GM12878 (cell line): ENCODE measurements at regions of chr3 and their contacts with region 1.

Region 1: DNA sequence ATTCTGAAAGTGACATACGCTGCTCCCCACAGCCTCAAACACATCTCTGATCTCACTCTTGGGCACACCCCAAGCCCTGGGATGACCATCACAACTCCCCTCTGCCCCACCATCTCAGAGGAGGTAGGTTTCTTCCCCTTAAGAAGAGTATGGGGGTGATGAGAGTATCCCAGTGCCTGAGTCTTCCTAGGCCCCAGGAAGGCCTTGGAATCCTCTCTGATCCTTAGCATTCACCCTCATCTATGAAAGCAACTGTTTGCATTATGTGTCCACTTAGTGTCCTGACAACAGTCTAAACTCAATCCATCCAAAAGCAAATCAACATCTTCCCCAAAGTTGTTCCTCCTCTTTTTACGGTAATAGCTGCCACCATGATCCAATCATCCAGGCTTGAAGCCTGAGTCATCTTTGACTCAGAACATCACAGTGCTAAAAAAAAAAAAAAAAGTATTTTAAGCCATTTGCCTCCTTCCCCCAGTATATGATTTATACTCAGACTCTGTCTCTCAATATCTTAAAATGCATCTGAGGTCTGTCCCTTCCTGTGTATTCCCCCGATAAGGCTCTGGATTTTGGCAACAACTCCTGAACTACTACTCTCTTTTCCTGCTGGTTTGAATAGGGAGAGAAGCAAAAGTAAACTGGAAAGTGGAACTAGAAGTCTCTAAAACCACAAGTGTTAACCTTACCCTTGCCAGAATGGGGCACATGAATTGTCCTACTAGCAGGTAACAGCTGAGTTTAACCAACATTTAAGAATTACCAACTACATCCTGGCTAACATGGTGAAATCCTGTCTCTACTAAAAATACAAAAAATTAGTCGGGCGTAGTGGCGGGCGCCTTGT is 22.5 kb downstream of the POPDC2 start:
- DNase-seq: peak; percentile 82
- ATAC-seq: peak; percentile 62
- H3K4me3 ChIP-seq: peak overlapping the region; percentile 21; the same call in 1 of the 2 replicates
- H3K27ac ChIP-seq: peak overlapping the region; percentile 96
- H3K4me1 ChIP-seq: peaks cover 37% of the 10 kb centered on the region
- H3K27me3 ChIP-seq: no peaks in the 10 kb centered on the region
- CTCF ChIP-seq: no peak
- EP300 ChIP-seq: peak; percentile 16 to 29; a peak in 1 of 4 replicates
- POLR2A ChIP-seq: no peak
- RAD21 ChIP-seq: no peak

Region 2: DNA sequence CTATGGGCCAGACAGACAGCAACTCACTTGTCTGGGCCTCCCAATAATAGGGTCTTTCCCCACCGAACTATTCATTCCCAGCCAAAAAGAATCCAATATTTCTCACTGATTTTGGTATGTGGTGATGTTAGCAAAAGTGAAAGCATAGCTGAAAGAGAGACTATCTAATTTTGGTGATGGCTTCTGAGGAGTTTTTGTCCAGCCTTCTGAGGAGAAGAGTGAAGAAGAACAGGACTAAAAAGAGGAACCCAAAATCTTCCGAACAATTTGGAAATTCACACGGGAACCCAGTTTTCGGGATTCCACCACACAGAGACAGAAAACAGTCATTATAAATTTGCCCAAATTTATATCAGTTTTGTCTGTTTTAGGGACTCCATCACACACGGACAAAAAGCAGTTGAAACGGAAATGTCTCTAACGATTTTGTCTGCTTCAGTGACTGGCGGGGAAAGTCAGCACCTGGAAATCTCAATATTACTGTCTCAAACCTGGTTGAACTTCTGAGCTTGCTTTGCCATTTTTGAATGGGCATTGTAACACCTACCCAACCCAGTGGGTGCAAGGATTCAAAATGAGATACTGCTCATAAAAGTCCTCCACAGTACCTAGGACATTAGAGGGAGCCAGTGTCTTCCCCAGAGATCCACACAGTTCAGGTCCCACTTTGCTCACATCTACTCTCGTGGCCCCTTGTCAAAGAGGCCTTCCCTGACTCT is 87.6 kb before region 1 on chr3:
- CTCF ChIA-PET with region 1: interaction called, 10 read pairs
- POLR2A ChIA-PET with region 1: interaction called, 3 read pairs
- RAD21 ChIA-PET with region 1: no interaction called
- SMC1A ChIA-PET with region 1: interaction called, 4 read pairs
- in situ Hi-C with region 1: no loop called
- intact Hi-C with region 1: no loop called
- DNase-seq: no peak
- ATAC-seq: peak; percentile 52
- H3K4me3 ChIP-seq: peak overlapping the region; percentile 57
- H3K27ac ChIP-seq: peak overlapping the region; percentile 93
- H3K4me1 ChIP-seq: peaks cover 43% of the 10 kb centered on the region
- H3K27me3 ChIP-seq: no peaks in the 10 kb centered on the region
- CTCF ChIP-seq: peak; percentile 11 to 50 (median 12); a peak in 3 of 6 replicates
- EP300 ChIP-seq: no peak
- POLR2A ChIP-seq: peak; percentile 54
- RAD21 ChIP-seq: peak; percentile 52

Region 3: GRCh38 chr3:119579366-119580165 is 58.3 kb before region 1 on chr3 and contains the start of gene ADPRH:
- CTCF ChIA-PET with region 1: no interaction called
- POLR2A ChIA-PET with region 1: interaction called, 9 read pairs
- RAD21 ChIA-PET with region 1: no interaction called
- SMC1A ChIA-PET with region 1: no interaction called
- in situ Hi-C with region 1: no loop called
- intact Hi-C with region 1: loop called (anchors 1 kb)
- DNase-seq: no peak
- ATAC-seq: peak; percentile 80
- H3K4me3 ChIP-seq: peak within 1 kb of the TSS; percentile 84
- H3K27ac ChIP-seq: peak within 1 kb of the TSS; percentile 97
- H3K4me1 ChIP-seq: peaks cover 17% of the 10 kb centered on the region
- H3K27me3 ChIP-seq: no peaks in the 10 kb centered on the region
- CTCF ChIP-seq: no peak
- EP300 ChIP-seq: no peak
- POLR2A ChIP-seq: peak; percentile 80
- RAD21 ChIP-seq: no peak
- polyA plus RNA-seq, gene ADPRH: 2.3 to 3.7 TPM